B cell (primary cell): ENCODE measurements at regions of chr2 and their contacts with region 1.

Region 1: DNA sequence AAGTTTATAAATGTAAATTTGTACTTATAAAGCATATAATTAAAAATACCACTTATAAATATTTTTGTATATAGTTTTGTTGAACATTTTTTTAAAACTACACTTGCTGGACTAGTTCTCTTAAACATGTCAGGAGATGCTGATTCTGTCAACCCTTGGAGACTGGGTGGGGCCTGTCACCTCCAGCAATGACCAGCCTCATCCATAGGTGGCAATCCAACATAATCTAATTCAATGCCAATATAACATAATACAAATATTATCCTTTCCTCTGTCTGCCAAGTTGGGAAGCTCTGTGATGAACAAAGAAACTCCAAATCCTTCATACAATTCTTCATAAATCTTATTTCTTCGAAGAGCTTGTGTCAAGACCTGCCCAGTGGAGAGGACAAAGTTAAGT is 140.4 kb downstream of the RBMS1 start:
- DNase-seq: peak; percentile 49
- ATAC-seq: peak; percentile 60
- H3K4me3 ChIP-seq: no peak overlapping the region
- H3K4me3 Mint-ChIP-seq: no peak overlapping the region
- H3K27ac ChIP-seq: no peak overlapping the region
- H3K27ac Mint-ChIP-seq: no peak overlapping the region
- H3K4me1 ChIP-seq: no peaks in the 10 kb centered on the region
- H3K4me1 Mint-ChIP-seq: peaks cover 11% of the 10 kb centered on the region
- H3K27me3 ChIP-seq: no peaks in the 10 kb centered on the region
- H3K27me3 Mint-ChIP-seq: no peaks in the 10 kb centered on the region
- CTCF ChIP-seq: peak; percentile 68

Region 2: GRCh38 chr2:160332318-160332717 is 20.8 kb before region 1 on chr2:
- CTCF ChIA-PET with region 1: interaction called, 14 read pairs
- POLR2A ChIA-PET with region 1: interaction called, 3 read pairs
- intact Hi-C with region 1: no loop called
- DNase-seq: no peak
- ATAC-seq: no peak
- H3K4me3 ChIP-seq: no peak overlapping the region
- H3K4me3 Mint-ChIP-seq: no peak overlapping the region
- H3K27ac ChIP-seq: no peak overlapping the region
- H3K27ac Mint-ChIP-seq: no peak overlapping the region
- H3K4me1 ChIP-seq: peaks cover 4 to 8% of the 10 kb centered on the region in 2 donors
- H3K4me1 Mint-ChIP-seq: peaks cover 50% of the 10 kb centered on the region
- H3K27me3 ChIP-seq: no peaks in the 10 kb centered on the region
- H3K27me3 Mint-ChIP-seq: no peaks in the 10 kb centered on the region
- CTCF ChIP-seq: no peak

Region 3: DNA sequence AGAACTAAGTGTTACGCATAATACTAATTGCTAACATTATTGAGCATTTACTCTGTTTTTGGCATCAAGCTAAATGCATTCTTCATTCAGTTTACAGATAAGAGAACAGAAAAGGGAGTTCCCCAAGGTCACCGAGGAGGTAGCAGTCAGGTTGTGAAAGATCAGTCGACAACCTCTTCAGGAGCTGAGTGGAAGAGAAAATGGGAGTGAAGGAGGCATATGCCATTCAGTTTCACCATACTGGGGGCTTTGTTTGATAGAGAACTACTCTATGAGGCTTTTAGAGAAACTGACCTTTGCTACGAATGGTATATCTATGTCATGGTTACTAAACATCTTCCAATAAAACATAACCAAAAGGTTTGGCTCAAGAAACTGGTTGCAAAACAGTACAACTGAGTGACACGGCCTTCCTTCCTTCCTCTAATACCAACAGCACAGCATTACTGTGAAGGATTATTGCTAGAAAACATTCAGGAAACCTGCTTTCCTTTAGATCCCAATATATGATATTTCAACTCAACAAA is 28.3 kb after region 1 on chr2:
- CTCF ChIA-PET with region 1: no interaction called
- POLR2A ChIA-PET with region 1: no interaction called
- intact Hi-C with region 1: no loop called
- DNase-seq: no peak
- ATAC-seq: no peak
- H3K4me3 ChIP-seq: no peak overlapping the region
- H3K4me3 Mint-ChIP-seq: no peak overlapping the region
- H3K27ac ChIP-seq: no peak overlapping the region
- H3K27ac Mint-ChIP-seq: no peak overlapping the region
- H3K4me1 ChIP-seq: peaks cover 18 to 24% of the 10 kb centered on the region in 2 donors
- H3K4me1 Mint-ChIP-seq: peaks cover 45% of the 10 kb centered on the region
- H3K27me3 ChIP-seq: no peaks in the 10 kb centered on the region
- H3K27me3 Mint-ChIP-seq: no peaks in the 10 kb centered on the region
- CTCF ChIP-seq: no peak

Region 4: DNA sequence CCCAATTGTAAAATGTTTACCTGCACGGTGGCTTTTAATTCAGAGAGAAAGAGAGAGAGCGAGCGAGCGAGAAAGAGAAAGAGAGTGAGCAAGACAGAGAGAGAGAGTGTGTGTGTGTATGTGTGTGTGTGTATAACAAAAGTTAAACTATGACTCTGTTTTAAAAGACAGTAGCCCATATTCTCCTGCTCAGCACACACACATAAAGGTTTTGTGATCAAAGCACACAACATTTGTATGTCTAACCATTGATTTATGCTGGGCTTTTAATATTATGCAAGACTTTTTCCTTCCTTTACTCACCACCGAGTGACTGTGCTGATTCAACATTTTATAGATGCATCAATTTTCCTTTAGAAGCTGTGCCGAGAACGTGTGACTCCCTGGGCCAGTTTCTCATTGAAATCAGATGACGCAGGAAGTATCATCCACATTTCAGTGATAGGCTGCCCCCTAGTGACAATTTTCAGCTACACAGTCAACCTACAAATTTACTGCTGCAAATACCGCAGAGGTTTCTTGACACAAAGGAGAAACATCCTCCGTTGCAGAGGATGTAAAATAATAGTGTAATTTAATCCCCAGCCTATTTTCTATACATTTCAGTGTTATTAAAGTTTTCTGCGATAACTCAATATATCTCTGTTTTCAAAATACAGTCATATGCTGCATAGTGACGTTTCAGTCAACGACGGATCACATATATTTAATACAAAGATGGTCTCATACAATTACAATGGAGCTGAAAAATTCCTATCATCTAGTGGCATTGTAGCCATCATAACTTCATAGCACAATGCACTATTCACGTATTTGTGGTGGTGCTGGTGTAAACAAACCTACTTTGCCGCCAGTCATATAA is 641.2 kb after region 1 on chr2:
- CTCF ChIA-PET with region 1: interaction called, 70 read pairs
- POLR2A ChIA-PET with region 1: no interaction called
- intact Hi-C with region 1: loop called (anchors 1 kb)
- DNase-seq: peak; percentile 81
- ATAC-seq: peak; percentile 68
- H3K4me3 ChIP-seq: no peak overlapping the region
- H3K4me3 Mint-ChIP-seq: no peak overlapping the region
- H3K27ac ChIP-seq: no peak overlapping the region
- H3K27ac Mint-ChIP-seq: no peak overlapping the region
- H3K4me1 ChIP-seq: peaks cover 0 to 3% of the 10 kb centered on the region in 2 donors
- H3K4me1 Mint-ChIP-seq: peaks cover 2% of the 10 kb centered on the region
- H3K27me3 ChIP-seq: no peaks in the 10 kb centered on the region
- H3K27me3 Mint-ChIP-seq: no peaks in the 10 kb centered on the region
- CTCF ChIP-seq: peak; percentile 90